ENCODE measurements at regions of chr3 and their contacts with region 1.

Region 1: GRCh38 chr3:11060500-11061251 is 68.1 kb downstream of the SLC6A1 start:
- DNase-seq: peak; percentile 56
- H3K4me3 ChIP-seq: peak overlapping the region in 2 of 3 experiments; percentile 12 to 25
- H3K27ac ChIP-seq: no peak overlapping the region
- H3K4me1 ChIP-seq: peaks cover 5% of the 10 kb centered on the region
- H3K27me3 ChIP-seq: no peaks in the 10 kb centered on the region
- CTCF ChIP-seq: peak; percentile 60 to 92

Region 2: DNA sequence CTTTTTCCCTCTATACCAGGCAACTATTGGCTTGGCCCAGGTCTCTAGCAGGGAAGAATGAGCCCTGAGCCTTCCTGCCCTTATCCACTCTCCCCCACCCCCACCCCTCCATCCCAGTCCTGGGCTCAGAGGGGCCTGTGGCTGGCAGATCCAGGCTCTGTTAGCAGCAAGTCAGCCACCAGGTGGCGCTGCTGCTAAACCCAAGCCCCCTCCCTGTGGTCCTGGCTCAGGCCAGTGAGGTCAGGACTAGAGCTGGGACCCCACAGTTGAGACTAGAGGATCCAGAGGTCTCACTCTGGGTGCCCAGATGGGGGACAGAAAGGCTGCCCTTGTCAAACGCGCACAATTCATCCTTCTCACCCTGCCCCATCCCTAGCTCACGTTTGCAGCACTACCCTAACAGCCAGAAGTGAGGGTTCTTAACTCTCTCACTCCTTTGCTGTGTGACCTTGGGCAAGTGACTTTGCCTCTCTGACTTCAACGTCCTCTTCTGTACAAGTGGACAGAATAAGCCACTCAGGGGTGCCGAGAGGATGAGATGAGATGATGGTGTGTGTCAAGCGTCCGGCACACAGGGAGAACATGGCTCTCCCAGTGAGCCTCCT is 114.9 kb before region 1 on chr3:
- CTCF ChIA-PET with region 1: no interaction called
- dilution Hi-C with region 1: no loop called
- in situ Hi-C with region 1: loop called (anchors 5 kb)
- intact Hi-C with region 1: loop called (anchors 1 kb)
- DNase-seq: peak; percentile 33
- H3K4me3 ChIP-seq: no peak overlapping the region
- H3K27ac ChIP-seq: no peak overlapping the region
- H3K4me1 ChIP-seq: peaks cover 16% of the 10 kb centered on the region
- H3K27me3 ChIP-seq: no peaks in the 10 kb centered on the region
- CTCF ChIP-seq: peak; percentile 66 to 85

Region 3: GRCh38 chr3:11155341-11156025 is 94.8 kb after region 1 on chr3:
- CTCF ChIA-PET with region 1: interaction called, 4 read pairs
- dilution Hi-C with region 1: no loop called
- in situ Hi-C with region 1: loop called in 1 of 2 experiments (anchors 5 kb)
- intact Hi-C with region 1: loop called (anchors 1 kb)
- DNase-seq: peak; percentile 73
- H3K4me3 ChIP-seq: peak overlapping the region; percentile 44 to 60 (median 58)
- H3K27ac ChIP-seq: no peak overlapping the region
- H3K4me1 ChIP-seq: peaks cover 9% of the 10 kb centered on the region
- H3K27me3 ChIP-seq: no peaks in the 10 kb centered on the region
- CTCF ChIP-seq: peak; percentile 88 to 95

Region 4: GRCh38 chr3:11221818-11222415 is 161.2 kb after region 1 on chr3:
- CTCF ChIA-PET with region 1: no interaction called
- dilution Hi-C with region 1: no loop called
- in situ Hi-C with region 1: no loop called
- intact Hi-C with region 1: loop called (anchors 5 kb)
- DNase-seq: no peak
- H3K4me3 ChIP-seq: no peak overlapping the region
- H3K27ac ChIP-seq: no peak overlapping the region
- H3K4me1 ChIP-seq: peaks cover 16% of the 10 kb centered on the region
- H3K27me3 ChIP-seq: no peaks in the 10 kb centered on the region
- CTCF ChIP-seq: peak in 1 of 2 donors; percentile 29